ENCODE measurements at regions of chr2 and their contacts with region 1.

Region 1: GRCh38 chr2:218257390-218257981 is 3.3 kb upstream of the GPBAR1 start:
- DNase-seq: peak in 1 of 3 donors; percentile 50
- ATAC-seq: no peak
- H3K4me3 ChIP-seq: no peak overlapping the region
- H3K27ac ChIP-seq: peak overlapping the region; percentile 15
- H3K4me1 ChIP-seq: peaks cover 22% of the 10 kb centered on the region
- H3K27me3 ChIP-seq: no peaks in the 10 kb centered on the region

Region 2: DNA sequence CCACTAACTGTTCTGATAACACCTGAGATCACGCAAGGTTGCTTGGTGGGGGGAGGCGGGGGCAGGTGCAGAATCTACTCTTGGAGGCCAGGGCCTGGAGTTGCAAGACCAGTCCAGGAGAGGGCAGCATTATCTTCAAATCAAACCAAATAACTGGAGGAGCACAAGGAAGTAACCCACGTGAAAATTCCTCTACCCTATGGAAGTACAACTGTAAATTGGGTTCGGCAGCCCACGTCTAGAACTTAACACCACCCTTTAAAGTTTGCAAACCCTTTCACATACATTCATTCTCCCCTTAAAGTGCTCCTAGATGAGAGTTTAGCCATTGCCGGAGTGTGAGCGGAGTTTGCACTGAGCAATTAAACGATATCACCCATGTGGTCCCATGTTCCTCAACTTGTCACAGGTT is 71.1 kb before region 1 on chr2:
- intact Hi-C with region 1: loop called in 2 of 4 experiments (anchors 5 kb)
- DNase-seq: peak; percentile 45 to 81 (median 64)
- ATAC-seq: peak; percentile 92 to 93
- H3K4me3 ChIP-seq: no peak overlapping the region
- H3K27ac ChIP-seq: no peak overlapping the region
- H3K4me1 ChIP-seq: no peaks in the 10 kb centered on the region
- H3K27me3 ChIP-seq: no peaks in the 10 kb centered on the region